ENCODE measurements at regions of chr10 and their contacts with region 1.

Region 1: DNA sequence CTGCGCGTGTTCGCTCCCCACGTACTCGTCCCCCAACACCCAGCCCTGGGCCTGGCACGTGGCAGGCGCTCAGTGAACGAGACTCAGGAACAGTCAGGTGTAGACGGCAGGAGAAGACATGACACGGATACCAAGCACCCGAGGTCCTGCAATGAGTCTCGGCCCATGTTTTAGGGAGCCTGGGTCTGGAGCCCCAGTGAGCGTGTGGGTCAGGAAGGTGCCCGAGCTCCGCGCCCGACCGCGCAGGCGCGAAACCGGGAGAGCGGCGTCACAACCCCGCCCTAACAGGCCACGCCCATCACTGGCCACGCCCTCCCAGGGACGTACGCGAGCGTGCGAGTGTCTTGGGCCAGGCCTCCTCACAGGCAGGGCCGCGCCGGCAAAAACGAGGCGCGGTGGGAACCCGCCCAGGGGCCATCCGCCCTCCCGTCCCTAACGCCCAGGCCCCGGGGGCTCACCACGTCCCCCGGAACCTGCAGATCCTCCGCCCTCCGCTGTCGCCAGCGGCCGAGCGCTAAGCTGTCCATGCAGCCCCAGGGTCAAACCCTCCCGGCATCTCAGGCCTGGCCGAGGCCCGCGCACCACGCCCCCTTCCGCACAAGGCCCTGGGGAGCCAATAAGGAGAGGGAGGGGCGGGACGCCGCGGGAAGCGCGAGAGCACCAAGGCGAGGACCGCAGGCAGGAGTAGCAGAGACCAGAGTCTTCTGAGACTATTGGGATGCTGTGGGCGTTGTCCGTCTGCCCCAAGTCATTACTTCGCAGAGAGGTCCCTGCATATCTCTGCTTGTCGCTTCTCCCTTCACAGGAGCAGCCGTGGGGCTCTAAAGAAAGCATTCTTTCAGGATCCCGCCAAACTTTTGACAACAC is at the start of gene C10orf143:
- DNase-seq: peak; percentile 98 to 99 (median 99)
- H3K4me3 ChIP-seq: peak within 1 kb of the TSS; percentile 86
- H3K27ac ChIP-seq: peak within 1 kb of the TSS; percentile 35 to 89
- H3K4me1 ChIP-seq: peaks cover 9% of the 10 kb centered on the region
- H3K27me3 ChIP-seq: no peaks in the 10 kb centered on the region
- CTCF ChIP-seq: no peak
- EP300 ChIP-seq: no peak
- POLR2A ChIP-seq: peak; percentile 71
- total RNA-seq, gene C10orf143: 3.1 to 10.3 (median 5.9) TPM

Region 2: GRCh38 chr10:129568583-129569344 is 541.7 kb before region 1 on chr10:
- intact Hi-C with region 1: no loop called
- DNase-seq: no peak
- H3K4me3 ChIP-seq: no peak overlapping the region
- H3K27ac ChIP-seq: no peak overlapping the region
- H3K4me1 ChIP-seq: no peaks in the 10 kb centered on the region
- H3K27me3 ChIP-seq: no peaks in the 10 kb centered on the region
- CTCF ChIP-seq: no peak
- EP300 ChIP-seq: no peak
- POLR2A ChIP-seq: no peak

Region 3: DNA sequence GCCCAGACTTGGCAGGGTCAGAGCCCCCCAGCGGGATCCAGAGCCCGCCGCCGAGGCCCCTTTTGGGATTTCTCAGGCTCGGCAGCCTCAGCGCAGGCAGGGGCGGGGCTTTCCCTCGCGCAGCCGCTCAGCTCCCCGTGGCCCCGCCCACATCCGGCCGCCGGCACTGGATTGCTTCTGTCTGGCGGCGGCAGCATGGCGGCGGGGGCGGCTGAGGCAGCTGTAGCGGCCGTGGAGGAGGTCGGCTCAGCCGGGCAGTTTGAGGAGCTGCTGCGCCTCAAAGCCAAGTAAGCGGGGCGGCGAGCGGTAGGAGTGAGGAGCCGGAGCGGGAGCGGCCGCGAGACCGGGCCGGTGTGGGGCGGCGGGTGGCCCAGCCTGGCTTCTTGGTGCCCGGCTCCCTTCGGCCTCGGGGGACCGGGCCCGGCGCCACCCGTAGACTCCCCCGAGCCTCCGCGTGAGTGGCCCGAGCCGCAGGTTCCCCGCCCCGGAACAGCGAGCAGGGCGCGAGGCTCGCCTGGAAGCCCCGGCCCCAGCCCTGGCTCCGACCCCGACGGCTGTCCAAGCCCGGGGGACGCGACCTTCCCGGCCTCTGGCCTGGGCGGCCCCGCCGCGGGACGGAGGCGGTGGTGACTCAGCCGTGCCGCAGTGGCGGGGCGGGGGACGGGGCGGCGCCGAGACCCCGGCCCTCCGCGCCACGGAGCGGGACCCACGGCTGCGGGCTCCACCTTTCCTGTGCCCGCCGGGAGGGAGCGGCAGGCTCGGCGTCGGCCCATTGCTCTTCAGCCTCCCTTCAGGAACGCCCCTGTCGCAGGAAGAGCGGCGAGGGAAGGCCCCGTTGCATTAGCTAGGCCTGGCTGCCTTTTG is 26.0 kb after region 1 on chr10 and contains the start of gene GLRX3:
- intact Hi-C with region 1: loop called in 2 of 4 experiments (anchors 2 kb)
- DNase-seq: peak; percentile 82 to 92 (median 88)
- H3K4me3 ChIP-seq: peak within 1 kb of the TSS; percentile 94
- H3K27ac ChIP-seq: peak within 1 kb of the TSS in 1 of 2 donors; percentile 58
- H3K4me1 ChIP-seq: peaks cover 18% of the 10 kb centered on the region
- H3K27me3 ChIP-seq: no peaks in the 10 kb centered on the region
- CTCF ChIP-seq: no peak
- EP300 ChIP-seq: no peak
- POLR2A ChIP-seq: peak; percentile 46
- total RNA-seq, gene GLRX3: 25.5 to 62.3 (median 46.1) TPM

Measured in ovary (tissue), 10 donors.